ENCODE measurements at regions of chr12 and their contacts with region 1.

Region 1: GRCh38 chr12:6182116-6182898 is 17.9 kb upstream of the CD9 start:
- DNase-seq: peak; percentile 70 to 85
- H3K4me3 ChIP-seq: no peak overlapping the region
- H3K27ac ChIP-seq: peak overlapping the region; percentile 84 to 85
- H3K4me1 ChIP-seq: peaks cover 10 to 24% of the 10 kb centered on the region in 2 donors
- H3K27me3 ChIP-seq: no peaks in the 10 kb centered on the region
- CTCF ChIP-seq: no peak
- POLR2A ChIP-seq: no peak

Region 2: GRCh38 chr12:6062757-6063735 is 119.3 kb before region 1 on chr12:
- intact Hi-C with region 1: loop called (anchors 10 kb)
- DNase-seq: peak; percentile 30 to 36
- H3K4me3 ChIP-seq: no peak overlapping the region
- H3K27ac ChIP-seq: peak overlapping the region in 1 of 2 donors; percentile 7
- H3K4me1 ChIP-seq: no peaks in the 10 kb centered on the region
- H3K27me3 ChIP-seq: no peaks in the 10 kb centered on the region
- CTCF ChIP-seq: peak; percentile 60 to 83 (median 76)
- POLR2A ChIP-seq: no peak